PC-9 (cell line): ENCODE measurements at regions of chrX and their contacts with region 1.

Region 1: DNA sequence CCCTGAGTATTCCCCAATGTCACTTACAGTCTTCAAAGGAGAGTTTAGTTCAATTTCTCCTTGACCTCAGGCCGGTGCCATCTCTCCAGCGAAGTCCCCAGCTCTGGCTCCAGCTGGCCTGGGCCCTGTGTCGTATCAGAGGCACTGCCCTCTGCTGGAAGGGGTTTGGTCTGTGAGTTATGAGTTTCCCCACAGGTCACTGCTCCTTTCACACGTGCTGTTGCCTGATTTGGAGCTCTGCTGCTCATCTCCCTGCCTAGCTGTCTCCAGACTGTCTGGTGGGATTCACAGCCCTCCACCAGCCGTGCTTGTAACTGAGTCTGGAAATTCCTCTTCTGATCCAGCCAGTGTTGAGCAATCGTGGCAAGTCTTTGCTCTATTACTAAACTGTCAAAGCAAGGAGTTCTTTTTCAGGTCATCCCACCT is at the start of gene RAP2C:
- DNase-seq: peak; percentile 65 to 71
- H3K4me3 ChIP-seq: peak within 1 kb of the TSS; percentile 98
- H3K27ac ChIP-seq: peak within 1 kb of the TSS; percentile 77
- H3K4me1 ChIP-seq: peaks cover 31% of the 10 kb centered on the region
- H3K27me3 ChIP-seq: no peaks in the 10 kb centered on the region
- CTCF ChIP-seq: peak; percentile 75
- total RNA-seq, gene RAP2C: 27.8 and 30.6 TPM in 2 replicates

Region 2: GRCh38 chrX:131830400-131831184 is 388.8 kb before region 1 on chrX:
- CTCF ChIA-PET with region 1: no interaction called
- POLR2A ChIA-PET with region 1: no interaction called
- intact Hi-C with region 1: loop called (anchors 2 kb)
- DNase-seq: peak; percentile 91 to 97
- H3K4me3 ChIP-seq: peak overlapping the region; percentile 70
- H3K27ac ChIP-seq: peak overlapping the region; percentile 91
- H3K4me1 ChIP-seq: peaks cover 29% of the 10 kb centered on the region
- H3K27me3 ChIP-seq: no peaks in the 10 kb centered on the region
- CTCF ChIP-seq: peak; percentile 79

Region 3: GRCh38 chrX:131854581-131854980 is 364.8 kb before region 1 on chrX:
- CTCF ChIA-PET with region 1: interaction called, 7 read pairs
- POLR2A ChIA-PET with region 1: no interaction called
- intact Hi-C with region 1: loop called (anchors 1 kb)
- DNase-seq: no peak
- H3K4me3 ChIP-seq: no peak overlapping the region
- H3K27ac ChIP-seq: no peak overlapping the region
- H3K4me1 ChIP-seq: no peaks in the 10 kb centered on the region
- H3K27me3 ChIP-seq: no peaks in the 10 kb centered on the region
- CTCF ChIP-seq: peak; percentile 76

Region 4: DNA sequence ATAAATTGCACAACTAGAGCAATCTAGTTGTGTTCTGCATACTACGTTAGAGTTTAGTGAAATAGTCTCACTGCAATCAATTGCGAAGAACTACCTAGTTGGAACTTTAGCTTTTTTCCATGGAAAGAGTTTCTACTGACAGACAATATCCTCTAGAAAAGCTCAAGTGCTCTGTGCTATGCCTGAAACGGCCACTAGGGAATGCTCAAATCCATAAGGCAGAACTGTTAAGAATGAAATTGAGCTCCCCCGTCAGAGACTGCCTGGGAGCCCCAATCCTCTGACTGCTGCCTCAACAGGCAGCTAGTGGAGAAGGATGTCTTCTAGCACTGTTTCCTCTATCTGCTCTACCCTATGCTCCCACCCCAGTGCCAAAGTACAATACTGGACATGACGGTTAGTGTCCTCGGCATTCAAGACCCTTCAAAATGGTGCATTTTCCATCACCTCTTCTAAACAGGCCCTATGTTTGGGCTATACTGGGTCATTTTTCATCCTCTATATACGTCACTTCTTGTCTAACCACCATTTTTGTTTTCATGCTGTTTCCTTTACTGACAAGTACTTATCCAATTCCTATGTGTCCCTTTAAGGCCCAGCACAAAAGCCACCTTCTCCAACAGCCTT is 126.8 kb before region 1 on chrX:
- CTCF ChIA-PET with region 1: interaction called, 21 read pairs
- POLR2A ChIA-PET with region 1: no interaction called
- intact Hi-C with region 1: loop called (anchors 1 kb)
- DNase-seq: peak; percentile 58 to 61
- H3K4me3 ChIP-seq: no peak overlapping the region
- H3K27ac ChIP-seq: no peak overlapping the region
- H3K4me1 ChIP-seq: no peaks in the 10 kb centered on the region
- H3K27me3 ChIP-seq: no peaks in the 10 kb centered on the region
- CTCF ChIP-seq: peak; percentile 91

Region 5: DNA sequence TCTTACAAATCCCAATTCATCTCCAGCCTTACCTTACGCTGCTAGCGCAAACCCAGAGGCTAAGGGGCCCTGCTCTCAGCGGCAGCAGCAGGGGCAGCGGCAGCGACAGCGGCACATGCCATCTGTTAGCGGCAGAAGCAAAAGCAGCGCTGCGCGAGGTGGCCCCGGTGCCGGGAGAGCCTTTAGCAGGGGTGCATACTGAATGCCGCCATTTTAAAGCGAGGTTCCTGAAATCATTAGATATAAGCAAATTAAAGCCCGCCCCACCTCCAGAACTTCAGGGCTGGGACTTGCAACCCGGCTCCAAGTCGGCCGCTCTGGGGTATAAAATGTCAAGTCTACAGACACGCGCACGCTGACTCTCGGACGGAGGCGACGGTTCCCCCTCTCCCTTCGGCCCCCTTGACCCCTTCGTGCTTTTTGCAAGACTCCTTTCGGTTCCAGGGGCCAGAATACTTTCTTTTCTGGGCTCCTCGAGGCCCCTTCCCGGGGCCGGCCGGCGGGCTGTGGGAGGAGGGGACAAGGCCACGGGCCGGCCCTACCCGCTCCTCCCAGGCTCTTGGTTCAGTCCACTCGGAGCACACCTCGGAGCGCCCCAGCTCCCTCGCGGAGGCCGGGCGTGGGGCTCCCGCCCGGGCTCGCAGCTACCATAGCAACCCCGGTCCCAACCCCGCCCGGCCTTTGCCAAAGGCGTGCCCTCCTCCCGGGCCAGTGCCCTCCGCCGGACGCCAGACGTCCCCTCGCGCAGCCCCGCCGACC is 269.6 kb after region 1 on chrX and contains the start of gene MBNL3:
- CTCF ChIA-PET with region 1: no interaction called
- POLR2A ChIA-PET with region 1: interaction called, 3 read pairs
- intact Hi-C with region 1: loop called (anchors 5 kb)
- DNase-seq: peak; percentile 72 to 86
- H3K4me3 ChIP-seq: peak within 1 kb of the TSS; percentile 93
- H3K27ac ChIP-seq: peak within 1 kb of the TSS; percentile 75
- H3K4me1 ChIP-seq: peaks cover 27% of the 10 kb centered on the region
- H3K27me3 ChIP-seq: no peaks in the 10 kb centered on the region
- CTCF ChIP-seq: no peak
- total RNA-seq, gene MBNL3: 24.4 and 36.1 TPM in 2 replicates